Heart left ventricle (tissue), 16 donors: ENCODE measurements at regions of chr4 and their contacts with region 1.

Region 1: DNA sequence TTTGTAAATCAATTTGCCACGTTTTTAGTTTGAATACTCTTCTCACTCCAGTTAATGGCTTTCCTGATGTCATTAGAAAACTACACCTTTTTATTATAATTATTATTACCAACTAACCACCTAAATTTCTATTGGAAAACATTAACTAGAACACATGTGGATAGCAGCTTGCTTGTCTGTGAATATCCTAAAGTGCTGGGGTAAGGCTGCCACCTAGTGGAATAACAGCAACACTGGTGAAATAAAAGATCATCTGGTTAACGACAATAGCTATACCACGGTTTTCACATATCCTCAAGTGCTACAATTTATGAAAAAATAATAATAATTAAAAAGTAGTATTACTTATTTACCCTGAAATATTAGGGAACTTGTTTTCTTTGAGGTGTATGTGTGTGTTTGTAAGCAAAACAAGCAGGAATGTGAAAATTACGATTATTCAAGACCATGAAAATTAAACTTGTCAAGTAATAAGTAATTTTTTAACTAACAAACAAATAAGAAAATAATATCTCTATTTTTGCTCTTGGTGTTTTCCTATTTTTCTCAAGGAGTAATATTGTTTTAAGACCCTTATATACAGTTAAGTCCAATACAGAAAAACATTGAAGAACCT is 130.1 kb upstream of the TECRL start:
- DNase-seq: peak in 4 of 5 donors; percentile 32 to 38 (median 34)
- ATAC-seq: peak; percentile 62 to 83 (median 75)
- H3K4me3 ChIP-seq: no peak overlapping the region
- H3K27ac ChIP-seq: peak overlapping the region in 2 of 12 donors; percentile 4 to 7
- H3K4me1 ChIP-seq: peaks cover 0 to 5% (median 0%) of the 10 kb centered on the region in 12 donors
- H3K27me3 ChIP-seq: no peaks in the 10 kb centered on the region
- CTCF ChIP-seq: peak; percentile 54 to 84 (median 76)
- POLR2A ChIP-seq: no peak

Region 2: DNA sequence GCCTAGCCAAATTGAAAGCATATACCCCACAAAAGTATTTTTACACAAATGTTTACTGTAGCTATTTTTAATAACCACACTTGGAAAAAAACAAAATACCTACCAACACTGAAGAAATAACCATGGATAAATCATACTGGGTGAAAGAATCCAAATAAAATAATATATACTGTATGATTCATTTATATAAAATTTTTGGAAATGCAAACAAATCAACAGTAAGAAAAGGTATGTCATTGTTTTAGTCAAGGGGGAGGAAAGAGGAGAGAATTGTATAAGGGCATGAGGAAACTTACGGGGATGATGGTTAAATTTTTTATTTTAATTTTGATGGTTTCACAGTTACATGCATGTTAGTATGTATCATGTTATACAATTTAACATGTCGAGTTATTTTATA is 687.8 kb before region 1 on chr4:
- intact Hi-C with region 1: no loop called
- DNase-seq: no peak
- ATAC-seq: no peak
- H3K4me3 ChIP-seq: no peak overlapping the region
- H3K27ac ChIP-seq: no peak overlapping the region
- H3K4me1 ChIP-seq: no peaks in the 10 kb centered on the region
- H3K27me3 ChIP-seq: no peaks in the 10 kb centered on the region
- CTCF ChIP-seq: no peak
- POLR2A ChIP-seq: no peak

Region 3: GRCh38 chr4:64158648-64159326 is 380.6 kb before region 1 on chr4:
- intact Hi-C with region 1: loop called in 9 of 10 experiments (anchors 2 to 10 kb)
- DNase-seq: peak in 3 of 5 donors; percentile 32 to 44 (median 35)
- ATAC-seq: no peak
- H3K4me3 ChIP-seq: peak overlapping the region in 9 of 12 donors; percentile 13 to 41 (median 25)
- H3K27ac ChIP-seq: no peak overlapping the region
- H3K4me1 ChIP-seq: peaks cover 0 to 5% (median 0%) of the 10 kb centered on the region in 12 donors
- H3K27me3 ChIP-seq: no peaks in the 10 kb centered on the region
- CTCF ChIP-seq: peak; percentile 64 to 84 (median 72)
- POLR2A ChIP-seq: no peak

Region 4: DNA sequence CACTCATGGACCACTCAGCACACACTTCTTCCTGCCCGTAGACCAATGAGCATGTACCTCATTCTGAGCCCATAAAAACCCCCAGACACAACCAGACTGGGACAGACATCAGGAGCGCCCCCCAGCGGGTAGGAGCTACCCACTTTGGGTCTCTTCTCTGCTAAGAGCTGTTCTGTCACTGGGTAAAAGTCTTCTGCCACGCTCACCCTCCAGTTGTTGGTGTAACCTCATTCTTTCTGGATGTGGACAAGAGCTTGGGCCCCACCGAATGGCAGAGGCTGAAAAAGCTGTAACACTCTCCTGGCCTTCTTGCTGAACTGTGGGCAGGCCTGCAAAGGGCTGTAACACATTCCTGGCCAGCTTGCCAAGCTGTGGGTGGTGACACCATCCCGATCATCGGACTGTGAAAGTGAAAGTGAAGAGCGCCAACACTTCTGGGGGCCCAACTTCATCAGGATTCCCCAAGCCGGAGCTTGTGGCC is 267.7 kb before region 1 on chr4:
- intact Hi-C with region 1: loop called in 1 of 10 experiments (anchors 5 kb)
- DNase-seq: peak; percentile 29 to 75 (median 52)
- ATAC-seq: peak; percentile 73 to 89 (median 87)
- H3K4me3 ChIP-seq: peak overlapping the region in 10 of 12 donors; percentile 5 to 47 (median 33)
- H3K27ac ChIP-seq: peak overlapping the region in 8 of 12 donors; percentile 11 to 68 (median 49)
- H3K4me1 ChIP-seq: peaks cover 0 to 12% (median 0%) of the 10 kb centered on the region in 12 donors
- H3K27me3 ChIP-seq: no peaks in the 10 kb centered on the region
- CTCF ChIP-seq: peak in 9 of 12 donors; percentile 9 to 35 (median 27)
- POLR2A ChIP-seq: no peak

Region 5: GRCh38 chr4:64305565-64306254 is 233.6 kb before region 1 on chr4:
- intact Hi-C with region 1: loop called in 1 of 10 experiments (anchors 10 kb)
- DNase-seq: no peak
- ATAC-seq: peak in 3 of 4 donors; percentile 19 to 29 (median 20)
- H3K4me3 ChIP-seq: no peak overlapping the region
- H3K27ac ChIP-seq: peak overlapping the region in 1 of 12 donors; percentile 32
- H3K4me1 ChIP-seq: no peaks in the 10 kb centered on the region
- H3K27me3 ChIP-seq: no peaks in the 10 kb centered on the region
- CTCF ChIP-seq: no peak
- POLR2A ChIP-seq: no peak

Region 6: DNA sequence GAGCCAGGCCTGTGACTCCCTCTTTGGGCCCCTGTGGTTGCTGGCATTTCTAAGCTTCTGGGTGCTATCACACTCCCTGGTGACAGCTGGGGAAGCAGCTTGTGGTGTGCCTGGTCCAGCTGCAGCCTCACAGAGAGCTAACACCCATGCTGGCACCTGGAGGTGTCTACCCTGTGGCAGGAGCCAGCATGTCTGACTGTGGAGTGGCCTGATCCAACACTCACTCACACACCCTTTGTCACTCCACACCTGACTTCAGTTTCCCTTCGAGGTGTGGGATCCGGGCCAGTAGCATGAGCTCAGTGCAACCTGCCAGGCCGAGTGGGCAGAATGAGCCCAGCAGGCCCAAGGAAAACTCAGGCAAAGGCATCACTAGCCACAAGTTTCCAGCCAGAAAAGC is 197.6 kb before region 1 on chr4:
- intact Hi-C with region 1: loop called in 1 of 10 experiments (anchors 5 kb)
- DNase-seq: peak; percentile 76 to 93 (median 81)
- ATAC-seq: peak; percentile 96 to 98 (median 96)
- H3K4me3 ChIP-seq: peak overlapping the region in 1 of 12 donors; percentile 4
- H3K27ac ChIP-seq: peak overlapping the region in 9 of 12 donors; percentile 43 to 86 (median 66)
- H3K4me1 ChIP-seq: peaks cover 0 to 41% (median 14%) of the 10 kb centered on the region in 12 donors
- H3K27me3 ChIP-seq: no peaks in the 10 kb centered on the region
- CTCF ChIP-seq: no peak
- POLR2A ChIP-seq: no peak

Region 7: GRCh38 chr4:64353904-64354303 is 185.4 kb before region 1 on chr4:
- intact Hi-C with region 1: loop called in 1 of 10 experiments (anchors 10 kb)
- DNase-seq: no peak
- ATAC-seq: peak; percentile 61 to 75 (median 63)
- H3K4me3 ChIP-seq: no peak overlapping the region
- H3K27ac ChIP-seq: peak overlapping the region in 9 of 12 donors; percentile 48 to 79 (median 60)
- H3K4me1 ChIP-seq: peaks cover 0 to 10% (median 0%) of the 10 kb centered on the region in 12 donors
- H3K27me3 ChIP-seq: no peaks in the 10 kb centered on the region
- CTCF ChIP-seq: no peak
- POLR2A ChIP-seq: no peak

Region 8: GRCh38 chr4:64407000-64407399 is 132.3 kb before region 1 on chr4:
- intact Hi-C with region 1: loop called in 7 of 10 experiments (anchors 5 to 10 kb)
- DNase-seq: no peak
- ATAC-seq: no peak
- H3K4me3 ChIP-seq: peak overlapping the region; percentile 3 to 61 (median 51)
- H3K27ac ChIP-seq: peak overlapping the region in 11 of 12 donors; percentile 19 to 85 (median 73)
- H3K4me1 ChIP-seq: no peaks in the 10 kb centered on the region
- H3K27me3 ChIP-seq: no peaks in the 10 kb centered on the region
- CTCF ChIP-seq: no peak
- POLR2A ChIP-seq: no peak

Region 9: DNA sequence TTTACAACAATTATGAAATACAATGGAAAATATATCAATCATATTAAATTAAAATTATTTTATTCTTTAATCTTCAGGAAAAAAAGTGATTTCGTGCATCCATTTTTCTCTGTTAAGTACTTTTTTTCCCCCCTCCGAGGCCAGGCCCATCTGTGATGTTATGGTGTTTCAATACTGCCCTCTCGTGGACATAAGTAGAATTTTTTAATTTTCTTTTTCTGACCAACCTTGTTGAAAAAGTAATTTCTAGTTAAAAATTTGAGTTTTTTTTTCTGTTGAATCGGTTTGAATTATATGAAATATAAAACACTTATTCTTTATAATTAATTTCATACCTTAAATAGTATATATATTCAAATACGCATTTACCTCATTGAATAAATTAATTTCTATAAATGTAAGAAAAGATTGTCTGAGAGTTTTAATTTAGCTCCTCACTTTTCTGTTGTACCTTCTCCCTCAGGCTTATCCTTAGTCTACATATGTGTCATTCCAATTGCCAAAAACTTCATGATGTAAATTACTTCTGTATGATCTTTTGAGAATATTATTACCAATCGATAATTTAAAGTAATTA is 45.7 kb after region 1 on chr4:
- intact Hi-C with region 1: no loop called
- DNase-seq: no peak
- ATAC-seq: no peak
- H3K4me3 ChIP-seq: no peak overlapping the region
- H3K27ac ChIP-seq: no peak overlapping the region
- H3K4me1 ChIP-seq: no peaks in the 10 kb centered on the region
- H3K27me3 ChIP-seq: no peaks in the 10 kb centered on the region
- CTCF ChIP-seq: peak; percentile 36 to 72 (median 62)
- POLR2A ChIP-seq: no peak